Left colon (tissue), 2 donors: ENCODE measurements at regions of chr11 and their contacts with region 1.

Region 1: DNA sequence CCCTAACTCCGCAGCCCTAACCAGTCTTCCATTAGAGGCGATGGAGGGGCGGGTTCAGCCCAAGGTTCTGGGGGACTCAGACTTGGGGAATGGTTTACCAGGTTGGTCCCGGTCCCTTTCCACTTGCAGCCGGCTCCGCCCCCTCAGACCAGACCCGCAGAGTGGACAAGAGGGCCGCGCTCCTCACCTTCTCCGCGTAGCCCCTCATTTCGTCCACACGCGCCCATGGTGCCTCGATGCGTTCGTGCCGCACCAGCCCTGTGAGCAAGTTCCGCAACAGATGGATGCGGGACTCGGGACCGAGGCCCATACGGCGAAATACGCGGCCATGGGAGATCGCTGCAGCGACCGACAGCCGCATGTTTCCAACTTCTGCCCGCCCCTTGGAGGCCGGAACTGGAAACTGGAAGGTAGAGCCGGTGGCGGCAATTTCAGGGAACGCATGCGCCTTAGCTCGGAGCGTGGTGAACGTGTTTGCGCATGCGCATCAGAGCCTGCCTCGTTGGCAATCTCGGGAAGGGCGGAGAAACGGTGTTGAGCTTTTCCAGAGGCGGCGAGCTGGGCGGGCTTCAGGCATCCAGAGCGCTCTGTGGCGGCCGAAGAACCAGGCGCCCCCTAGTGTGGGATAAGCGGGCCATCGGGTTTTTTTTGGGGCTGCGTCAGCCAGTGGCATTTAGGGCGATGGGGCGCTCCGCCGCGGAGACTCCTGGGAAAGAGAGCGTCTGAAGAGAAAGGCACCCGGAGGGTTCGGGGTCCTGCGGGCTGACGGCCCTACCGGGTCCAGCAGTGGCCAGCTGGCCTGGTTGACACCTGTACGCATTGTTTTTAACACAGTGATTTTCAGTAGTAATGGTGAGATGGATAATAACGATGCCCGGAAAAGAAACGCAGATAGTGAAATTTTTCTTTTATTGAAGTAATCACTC is at the start of gene MRPL17:
- DNase-seq: peak; percentile 99
- ATAC-seq: peak; percentile 96
- total RNA-seq, gene MRPL17: 24.7 to 29.9 TPM

Region 2: DNA sequence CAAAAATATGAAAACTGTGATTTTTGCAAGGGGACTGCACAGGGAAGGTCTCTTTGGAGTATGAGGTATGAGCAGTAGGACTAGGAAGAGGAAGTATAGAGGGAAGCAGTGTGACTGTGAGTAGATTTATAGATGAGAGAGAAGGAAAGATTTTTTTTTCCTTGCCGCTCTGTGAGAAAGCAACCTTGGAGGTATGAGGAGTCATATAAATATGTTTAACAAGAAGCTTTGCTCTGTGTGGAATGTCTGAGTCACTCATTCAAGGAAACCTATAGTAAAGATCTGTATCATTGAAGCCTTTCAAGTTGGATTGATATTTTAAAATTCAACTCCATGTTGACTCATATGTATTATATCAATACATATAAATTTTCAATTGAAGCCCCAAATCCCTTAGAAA is 159.9 kb before region 1 on chr11:
- intact Hi-C with region 1: loop called in 1 of 2 experiments (anchors 10 kb)
- DNase-seq: no peak
- ATAC-seq: peak; percentile 64